T-cell (primary cell): ENCODE measurements at regions of chr12 and their contacts with region 1.

Region 1: DNA sequence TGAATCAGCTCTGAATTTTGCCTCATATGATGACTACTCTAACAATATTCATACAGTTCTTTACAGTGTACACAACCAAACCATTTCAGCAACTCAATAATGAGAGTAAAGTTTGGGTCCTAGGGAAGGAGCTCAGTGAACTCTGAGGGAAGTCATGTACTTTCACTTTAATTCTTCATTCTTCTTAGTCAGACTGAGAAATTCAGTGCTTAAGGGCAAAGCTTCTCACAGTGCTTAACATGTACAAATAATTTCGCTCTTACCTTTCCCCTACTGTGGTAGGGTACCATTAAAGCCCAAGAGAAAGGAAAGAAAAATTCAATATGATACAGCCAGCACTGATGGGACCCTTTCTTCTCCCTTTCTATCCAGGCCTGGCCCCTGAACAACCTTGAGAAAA is 435.0 kb downstream of the NELL2 start:
- DNase-seq: no peak
- ATAC-seq: no peak
- H3K4me3 ChIP-seq: no peak overlapping the region
- H3K4me3 Mint-ChIP-seq: no peak overlapping the region
- H3K27ac ChIP-seq: no peak overlapping the region
- H3K27ac Mint-ChIP-seq: no peak overlapping the region
- H3K4me1 ChIP-seq: no peaks in the 10 kb centered on the region
- H3K4me1 Mint-ChIP-seq: no peaks in the 10 kb centered on the region
- H3K27me3 ChIP-seq: no peaks in the 10 kb centered on the region
- H3K27me3 Mint-ChIP-seq: peaks cover 0 to 15% of the 10 kb centered on the region in 2 donors

Region 2: GRCh38 chr12:44217146-44217883 is 223.8 kb before region 1 on chr12:
- CTCF ChIA-PET with region 1: no interaction called
- POLR2A ChIA-PET with region 1: interaction called in 1 of 2 experiments, 11 read pairs
- DNase-seq: no peak
- ATAC-seq: no peak
- H3K4me3 ChIP-seq: no peak overlapping the region
- H3K4me3 Mint-ChIP-seq: no peak overlapping the region
- H3K27ac ChIP-seq: no peak overlapping the region
- H3K27ac Mint-ChIP-seq: no peak overlapping the region
- H3K4me1 ChIP-seq: no peaks in the 10 kb centered on the region
- H3K4me1 Mint-ChIP-seq: no peaks in the 10 kb centered on the region
- H3K27me3 ChIP-seq: no peaks in the 10 kb centered on the region
- H3K27me3 Mint-ChIP-seq: no peaks in the 10 kb centered on the region